ENCODE measurements at regions of chr2 and their contacts with region 1.

Region 1: DNA sequence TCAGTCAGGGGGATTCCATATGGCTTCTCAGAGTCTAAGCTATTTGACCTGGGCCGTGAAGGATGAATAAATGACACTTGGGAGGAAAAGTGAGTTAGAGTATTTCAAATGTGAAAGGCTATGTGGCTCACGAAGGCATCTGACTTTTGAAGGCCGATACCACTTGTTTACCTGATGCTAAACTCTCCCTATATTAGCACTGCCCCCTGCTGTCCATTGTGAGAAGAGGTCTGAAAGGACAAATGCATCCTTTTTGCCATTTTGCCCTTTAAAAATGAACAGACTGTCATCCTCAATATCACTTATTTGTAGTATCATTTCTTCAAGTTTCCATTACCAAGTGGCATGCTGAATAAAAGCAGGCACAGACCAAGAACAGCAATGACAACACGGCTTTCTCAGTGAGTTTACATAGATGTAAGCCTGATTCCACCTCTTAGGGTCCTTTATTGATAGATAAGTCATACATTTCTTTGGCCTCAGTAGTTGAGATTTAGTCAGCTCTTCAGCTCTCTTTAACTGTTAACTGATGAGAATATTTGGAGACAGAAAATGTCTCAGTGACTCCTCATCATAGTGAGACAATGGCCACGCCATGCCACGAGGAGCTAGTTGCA is 40.1 kb downstream of the DOCK10 start:
- DNase-seq: peak; percentile 43
- ATAC-seq: peak; percentile 86
- H3K4me3 ChIP-seq: no peak overlapping the region
- H3K27ac ChIP-seq: no peak overlapping the region
- H3K4me1 ChIP-seq: no peaks in the 10 kb centered on the region
- H3K27me3 ChIP-seq: no peaks in the 10 kb centered on the region
- CTCF ChIP-seq: peak; percentile 74 to 79 (median 76)
- POLR2A ChIP-seq: no peak
- RAD21 ChIP-seq: peak; percentile 87

Region 2: DNA sequence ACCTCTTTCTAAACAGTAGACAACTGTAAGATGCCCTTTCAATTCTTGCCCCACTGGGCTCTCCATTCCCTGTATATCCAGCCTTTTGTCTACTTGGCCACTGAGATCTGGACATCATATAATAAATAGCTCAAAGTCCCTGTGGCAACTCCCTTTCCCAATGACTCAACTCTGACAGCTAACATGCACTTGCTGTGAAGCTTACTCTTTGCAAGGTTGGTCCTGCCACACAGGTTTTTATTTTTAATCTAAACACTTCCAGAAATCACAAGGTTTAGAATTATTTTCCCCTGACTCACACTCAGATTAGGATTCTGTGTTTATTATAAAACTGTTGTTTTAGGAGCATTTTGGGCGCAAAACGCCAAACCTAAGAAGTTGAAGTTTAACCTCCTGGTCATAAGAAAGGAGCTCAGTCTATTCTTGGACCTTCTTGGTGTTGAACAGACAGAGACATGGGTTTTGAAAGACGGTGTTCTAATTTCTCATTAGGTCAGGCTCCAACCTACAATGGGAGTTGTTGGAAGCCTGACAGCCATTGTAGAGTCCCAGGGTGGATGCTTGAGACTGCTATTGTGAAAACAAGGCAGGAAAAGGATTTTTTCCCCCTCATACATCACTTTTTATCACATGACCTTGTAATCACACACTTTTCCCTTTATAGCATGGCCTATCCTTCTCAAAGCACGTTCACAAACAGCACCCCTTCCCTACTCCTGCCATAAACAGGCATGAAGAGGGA is 838.4 kb before region 1 on chr2:
- CTCF ChIA-PET with region 1: no interaction called
- POLR2A ChIA-PET with region 1: no interaction called
- RAD21 ChIA-PET with region 1: no interaction called
- intact Hi-C with region 1: no loop called
- DNase-seq: no peak
- ATAC-seq: no peak
- H3K4me3 ChIP-seq: no peak overlapping the region
- H3K27ac ChIP-seq: no peak overlapping the region
- H3K4me1 ChIP-seq: no peaks in the 10 kb centered on the region
- H3K27me3 ChIP-seq: no peaks in the 10 kb centered on the region
- CTCF ChIP-seq: no peak
- POLR2A ChIP-seq: no peak
- RAD21 ChIP-seq: no peak

Region 3: DNA sequence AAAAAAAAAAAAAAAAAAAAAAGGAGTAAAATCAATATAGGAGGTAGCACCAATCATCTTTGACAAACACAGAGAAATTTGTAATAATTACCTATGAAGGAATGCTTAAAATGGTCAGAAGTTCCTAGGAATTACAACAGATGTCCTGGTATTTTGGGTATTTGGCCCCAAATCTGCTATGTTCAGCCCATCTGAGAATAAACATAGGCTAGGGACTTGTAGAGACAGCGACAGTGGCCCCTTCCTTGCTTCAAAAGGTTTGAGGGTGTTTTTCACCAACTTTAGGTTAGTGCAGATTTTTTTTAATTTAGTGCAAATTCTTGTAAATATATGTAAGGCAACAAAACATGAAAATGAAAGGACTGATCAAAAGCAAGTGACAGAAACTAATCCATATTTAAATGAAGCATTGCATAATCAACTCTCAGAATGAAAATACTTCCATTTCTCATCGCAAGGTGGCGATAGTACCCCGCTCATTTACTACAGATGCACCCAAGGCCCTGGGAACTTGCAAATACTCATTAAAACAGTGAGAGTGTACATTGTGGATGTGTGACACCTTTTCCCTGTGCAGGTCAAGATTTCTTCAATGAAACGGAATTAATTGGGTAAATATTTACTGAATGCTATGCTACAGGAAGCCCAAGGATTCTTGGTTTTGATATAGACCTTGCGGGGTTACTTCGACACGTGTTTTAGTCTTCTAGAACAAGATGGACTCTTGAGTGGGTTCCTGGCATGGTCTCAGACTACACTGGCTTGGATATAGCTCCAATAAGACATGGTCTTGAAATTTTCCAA is 644.8 kb before region 1 on chr2:
- CTCF ChIA-PET with region 1: interaction called, 3 read pairs
- POLR2A ChIA-PET with region 1: no interaction called
- RAD21 ChIA-PET with region 1: no interaction called
- intact Hi-C with region 1: loop called (anchors 1 kb)
- DNase-seq: peak; percentile 44
- ATAC-seq: peak; percentile 83
- H3K4me3 ChIP-seq: no peak overlapping the region
- H3K27ac ChIP-seq: no peak overlapping the region
- H3K4me1 ChIP-seq: 0 out of 4 replicates have a peak, but pooled peaks cover 0 to 4% of the 10 kb centered on the region in 2 experiments
- H3K27me3 ChIP-seq: no peaks in the 10 kb centered on the region
- CTCF ChIP-seq: peak; percentile 62 to 91 (median 85); a peak in 5 of 6 replicates
- POLR2A ChIP-seq: no peak
- RAD21 ChIP-seq: peak; percentile 92

Region 4: DNA sequence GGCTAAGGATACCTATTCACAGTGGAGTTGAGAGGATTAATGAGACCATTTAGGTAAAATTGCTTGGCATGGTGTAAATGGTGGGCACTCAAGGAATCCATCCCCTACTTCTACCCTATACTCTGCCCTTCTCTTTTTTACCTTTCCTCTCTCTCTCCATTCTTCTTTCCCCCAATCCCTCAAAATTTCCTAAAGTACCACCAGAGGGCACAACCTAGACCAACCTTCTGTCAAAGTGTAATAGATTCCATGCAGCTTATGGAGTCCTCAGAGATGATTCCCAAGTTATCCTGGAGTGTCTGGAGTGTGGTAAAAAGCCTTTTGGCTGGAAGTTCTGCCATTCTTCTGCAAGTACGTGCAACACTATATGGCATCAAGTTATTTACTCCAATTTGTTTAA is 253.0 kb before region 1 on chr2:
- CTCF ChIA-PET with region 1: no interaction called
- POLR2A ChIA-PET with region 1: no interaction called
- RAD21 ChIA-PET with region 1: no interaction called
- intact Hi-C with region 1: loop called (anchors 1 kb)
- DNase-seq: no peak
- ATAC-seq: peak; percentile 70
- H3K4me3 ChIP-seq: no peak overlapping the region
- H3K27ac ChIP-seq: no peak overlapping the region
- H3K4me1 ChIP-seq: no peaks in the 10 kb centered on the region
- H3K27me3 ChIP-seq: no peaks in the 10 kb centered on the region
- CTCF ChIP-seq: peak; percentile 29 to 50 (median 47); a peak in 5 of 6 replicates
- POLR2A ChIP-seq: no peak
- RAD21 ChIP-seq: peak; percentile 34; the same call in 1 of the 2 replicates

Region 5: GRCh38 chr2:224778474-224778877 is 223.7 kb before region 1 on chr2:
- CTCF ChIA-PET with region 1: no interaction called
- POLR2A ChIA-PET with region 1: no interaction called
- RAD21 ChIA-PET with region 1: no interaction called
- intact Hi-C with region 1: loop called (anchors 10 kb)
- DNase-seq: peak; percentile 46
- ATAC-seq: peak; percentile 67
- H3K4me3 ChIP-seq: no peak overlapping the region
- H3K27ac ChIP-seq: no peak overlapping the region
- H3K4me1 ChIP-seq: peaks cover 0 to 11% of the 10 kb centered on the region in 2 experiments; a peak in 1 of 4 replicates
- H3K27me3 ChIP-seq: no peaks in the 10 kb centered on the region
- CTCF ChIP-seq: peak; percentile 65 to 82 (median 79); a peak in 5 of 6 replicates
- POLR2A ChIP-seq: no peak
- RAD21 ChIP-seq: peak; percentile 87

Region 6: DNA sequence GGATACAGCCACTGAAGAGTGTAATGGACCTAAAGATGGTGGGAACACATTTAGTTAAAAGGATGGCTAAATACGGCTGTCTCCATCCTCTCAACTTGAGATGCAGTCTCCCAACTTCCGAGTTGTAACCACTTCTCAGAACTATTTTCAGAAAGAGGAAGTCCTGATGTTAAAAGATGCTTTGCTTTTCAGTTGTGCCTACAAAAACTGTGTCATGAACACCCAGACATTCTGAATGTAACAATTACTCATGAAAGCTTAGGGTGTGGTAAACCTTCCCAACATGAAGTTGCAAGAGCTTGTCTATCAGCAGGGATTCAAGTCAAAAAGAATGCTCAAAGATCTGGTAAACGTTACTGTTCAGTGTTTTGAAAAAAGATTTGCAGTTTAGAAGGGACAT is 107.8 kb before region 1 on chr2:
- CTCF ChIA-PET with region 1: no interaction called
- POLR2A ChIA-PET with region 1: no interaction called
- RAD21 ChIA-PET with region 1: no interaction called
- intact Hi-C with region 1: no loop called
- DNase-seq: no peak
- ATAC-seq: no peak
- H3K4me3 ChIP-seq: no peak overlapping the region
- H3K27ac ChIP-seq: no peak overlapping the region
- H3K4me1 ChIP-seq: no peaks in the 10 kb centered on the region
- H3K27me3 ChIP-seq: no peaks in the 10 kb centered on the region
- CTCF ChIP-seq: no peak
- POLR2A ChIP-seq: no peak
- RAD21 ChIP-seq: no peak

Region 7: DNA sequence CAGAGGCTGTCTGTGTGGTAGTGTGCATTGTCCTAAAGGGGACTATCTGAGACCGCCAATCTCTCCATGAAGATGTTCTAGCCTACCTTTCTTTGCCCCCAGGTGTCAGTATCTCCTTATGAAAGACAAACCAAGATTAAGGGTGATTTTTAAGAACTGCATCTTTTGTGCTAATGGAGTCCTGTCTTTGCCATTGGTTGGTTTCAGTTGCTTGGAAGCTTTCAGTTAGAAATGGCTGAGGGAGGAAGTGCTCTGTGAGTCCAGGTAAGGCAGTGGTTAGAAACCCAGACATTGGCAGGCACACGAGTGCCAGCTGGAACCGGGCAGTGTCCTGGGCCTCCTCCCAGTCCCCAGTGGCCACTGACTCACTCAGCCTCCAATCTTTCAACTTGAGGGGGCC is 71.2 kb before region 1 on chr2:
- CTCF ChIA-PET with region 1: no interaction called
- POLR2A ChIA-PET with region 1: no interaction called
- RAD21 ChIA-PET with region 1: no interaction called
- intact Hi-C with region 1: loop called (anchors 1 kb)
- DNase-seq: no peak
- ATAC-seq: peak; percentile 47
- H3K4me3 ChIP-seq: no peak overlapping the region
- H3K27ac ChIP-seq: no peak overlapping the region
- H3K4me1 ChIP-seq: no peaks in the 10 kb centered on the region
- H3K27me3 ChIP-seq: no peaks in the 10 kb centered on the region
- CTCF ChIP-seq: peak in 2 of 3 experiments; percentile 37 to 46; a peak in 3 of 6 replicates
- POLR2A ChIP-seq: no peak
- RAD21 ChIP-seq: peak; percentile 55

Region 8: DNA sequence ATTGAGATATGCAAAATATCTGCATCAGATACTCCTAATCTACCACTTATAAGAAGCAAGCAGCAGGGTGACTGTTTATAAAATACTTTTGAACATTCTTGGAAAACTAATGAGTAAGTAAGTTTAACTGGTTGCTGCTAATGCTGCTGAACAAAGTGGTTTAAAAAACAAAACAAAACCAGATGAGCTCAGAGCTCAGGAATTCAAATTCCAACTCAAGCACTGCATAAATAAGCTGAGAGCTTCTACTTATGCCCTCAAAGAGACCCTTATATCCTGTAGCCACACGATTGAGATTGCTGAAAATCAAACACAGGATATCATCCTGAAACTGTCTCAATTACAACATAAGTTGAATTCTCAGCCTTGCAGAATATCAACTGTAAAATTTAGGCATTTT is 335.0 kb after region 1 on chr2:
- CTCF ChIA-PET with region 1: no interaction called
- POLR2A ChIA-PET with region 1: no interaction called
- RAD21 ChIA-PET with region 1: no interaction called
- intact Hi-C with region 1: no loop called
- DNase-seq: no peak
- ATAC-seq: no peak
- H3K4me3 ChIP-seq: no peak overlapping the region
- H3K27ac ChIP-seq: no peak overlapping the region
- H3K4me1 ChIP-seq: no peaks in the 10 kb centered on the region
- H3K27me3 ChIP-seq: no peaks in the 10 kb centered on the region
- CTCF ChIP-seq: no peak
- POLR2A ChIP-seq: no peak
- RAD21 ChIP-seq: no peak